ENCODE measurements at regions of chr11 and their contacts with region 1.

Region 1: GRCh38 chr11:130740819-130741218 is 175.5 kb downstream of the SNX19 start:
- DNase-seq: no peak
- H3K4me3 ChIP-seq: no peak overlapping the region
- H3K27ac ChIP-seq: no peak overlapping the region
- H3K4me1 ChIP-seq: no peaks in the 10 kb centered on the region
- H3K27me3 ChIP-seq: no peaks in the 10 kb centered on the region
- CTCF ChIP-seq: no peak
- POLR2A ChIP-seq: no peak

Region 2: DNA sequence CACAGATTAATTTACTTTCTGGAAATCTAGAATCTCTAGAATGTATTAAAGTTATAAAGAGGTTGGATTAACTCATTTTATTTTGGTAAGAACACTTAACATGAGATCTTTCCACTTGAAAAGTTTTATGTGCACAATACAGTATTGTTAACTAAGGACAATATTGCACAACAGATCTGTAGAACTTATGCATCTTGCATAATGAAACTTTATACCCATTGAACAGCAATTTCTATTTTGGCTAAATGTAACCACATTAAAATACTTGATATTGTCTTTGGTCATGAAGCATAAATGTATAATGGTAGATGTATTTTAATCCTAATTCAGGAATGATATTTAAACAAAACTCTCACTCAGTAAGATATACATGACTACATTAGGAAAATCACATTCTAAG is 28.3 kb before region 1 on chr11:
- intact Hi-C with region 1: loop called (anchors 2 kb)
- DNase-seq: no peak
- H3K4me3 ChIP-seq: no peak overlapping the region
- H3K27ac ChIP-seq: no peak overlapping the region
- H3K4me1 ChIP-seq: no peaks in the 10 kb centered on the region
- H3K27me3 ChIP-seq: no peaks in the 10 kb centered on the region
- CTCF ChIP-seq: no peak
- POLR2A ChIP-seq: no peak